ENCODE measurements at regions of chr4 and their contacts with region 1.

Region 1: GRCh38 chr4:48141048-48141447 is 7.0 kb upstream of the TXK start:
- DNase-seq: peak; percentile 37
- CTCF ChIP-seq: peak; percentile 40

Region 2: GRCh38 chr4:48269861-48270522 is 128.9 kb after region 1 on chr4:
- in situ Hi-C with region 1: loop called (anchors 10 kb)
- DNase-seq: peak; percentile 98
- CTCF ChIP-seq: peak; percentile 36

Measured in GM13977 (cell line).